ENCODE measurements at regions of chr3 and their contacts with region 1.

Region 1: DNA sequence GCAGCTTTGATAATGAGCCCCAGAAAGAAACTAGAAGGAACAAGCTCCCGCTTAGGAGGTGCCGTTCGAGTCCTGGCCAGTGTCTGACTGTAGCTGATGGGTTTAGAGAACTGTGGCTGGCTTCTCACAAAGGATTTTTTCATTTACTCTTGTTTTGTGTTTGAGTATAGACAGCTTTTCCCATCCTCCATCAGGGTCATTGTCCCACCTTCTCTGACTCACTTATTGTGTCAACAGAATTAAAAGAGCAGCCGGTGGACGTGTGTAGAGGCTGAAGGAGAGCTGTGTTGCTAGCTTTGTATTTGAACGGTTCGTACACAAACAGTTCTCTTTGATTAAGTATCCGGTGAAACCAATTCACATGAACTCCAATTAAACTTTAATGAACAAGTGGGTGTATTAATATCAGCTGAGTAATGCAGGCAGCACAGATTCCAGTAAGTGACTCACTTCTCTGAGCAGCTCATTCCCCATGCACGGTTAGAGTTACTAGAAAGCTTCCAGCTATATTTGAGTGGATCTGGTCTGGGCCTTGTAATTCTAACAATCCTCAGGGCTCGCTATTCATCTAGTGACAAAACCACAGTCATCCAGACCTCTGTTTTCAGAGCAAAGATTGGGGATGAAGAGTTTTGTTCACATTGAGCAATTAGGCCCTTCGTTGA is 141.0 kb downstream of the LPP start:
- DNase-seq: peak; percentile 94
- ATAC-seq: peak; percentile 89
- H3K4me3 ChIP-seq: peak overlapping the region; percentile 22; the same call in 1 of the 2 replicates
- H3K27ac ChIP-seq: peak overlapping the region; percentile 85
- H3K4me1 ChIP-seq: peaks cover 62% of the 10 kb centered on the region
- H3K27me3 ChIP-seq: no peaks in the 10 kb centered on the region
- CTCF ChIP-seq: no peak

Region 2: DNA sequence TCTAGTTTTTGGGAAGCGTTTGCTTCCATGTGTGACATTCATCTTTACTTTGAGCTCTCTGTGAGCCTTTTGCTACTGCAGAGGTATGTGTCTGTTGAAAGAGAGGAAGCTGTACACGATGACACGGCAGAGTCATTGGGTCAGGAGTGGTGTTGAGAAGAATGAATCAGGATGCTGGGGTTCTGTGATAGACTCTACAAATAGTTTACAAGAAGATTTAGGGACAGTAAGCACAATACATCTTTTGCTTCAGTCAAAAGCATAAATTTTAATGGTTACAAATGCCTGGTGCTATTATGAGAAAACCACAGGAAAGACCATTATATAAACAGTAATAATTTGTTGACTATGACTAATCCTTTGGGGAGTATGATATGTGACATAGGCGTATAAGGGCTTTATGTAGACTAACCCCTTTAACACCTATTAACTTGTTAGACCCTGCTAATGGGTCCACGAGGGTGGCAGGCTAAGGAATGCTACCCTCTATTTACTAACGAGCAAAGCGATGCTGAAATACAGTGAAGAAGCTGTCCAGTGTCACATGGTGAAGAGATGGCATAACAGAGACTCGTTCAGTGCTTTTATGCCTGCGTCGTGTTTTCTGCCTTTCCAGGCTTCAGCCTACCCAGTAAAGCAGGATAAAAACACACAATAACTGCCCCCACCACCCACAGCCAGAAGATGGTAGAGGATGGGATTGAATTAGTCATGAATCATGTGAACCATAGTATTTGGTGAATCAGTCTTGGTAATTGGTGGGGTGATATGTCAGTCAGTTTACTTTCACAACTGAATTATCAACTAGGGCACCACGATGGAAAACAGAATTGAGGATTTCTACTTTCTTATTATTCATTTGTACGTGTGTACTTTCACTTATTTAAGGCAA is 22.2 kb before region 1 on chr3:
- CTCF ChIA-PET with region 1: interaction called, 5 read pairs
- POLR2A ChIA-PET with region 1: interaction called, 3 read pairs
- intact Hi-C with region 1: loop called (anchors 1 kb)
- DNase-seq: peak; percentile 87
- ATAC-seq: peak; percentile 89
- H3K4me3 ChIP-seq: 0 out of 2 replicates have a peak overlapping the region, but pooled peaks have one; percentile 14
- H3K27ac ChIP-seq: peak overlapping the region; percentile 91
- H3K4me1 ChIP-seq: peaks cover 59% of the 10 kb centered on the region
- H3K27me3 ChIP-seq: no peaks in the 10 kb centered on the region
- CTCF ChIP-seq: no peak

Region 3: DNA sequence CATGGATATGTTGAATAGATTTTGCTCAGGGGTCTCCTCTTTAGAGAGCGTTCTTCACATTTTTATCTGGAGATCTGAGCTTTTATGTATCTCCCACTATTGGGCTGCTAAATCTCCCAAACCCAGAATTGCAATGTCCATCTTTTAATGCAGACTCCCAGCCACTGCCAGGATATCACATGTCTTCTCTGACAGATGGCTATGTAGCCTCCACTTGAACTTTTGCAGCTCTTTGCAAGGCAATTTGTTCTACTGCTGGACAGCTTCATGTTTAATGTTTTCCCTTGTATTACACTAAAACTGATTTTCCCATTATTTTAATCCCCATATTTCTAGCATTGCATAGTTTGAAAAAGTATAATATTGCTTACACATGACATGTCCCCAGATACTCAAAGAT is 36.2 kb after region 1 on chr3:
- CTCF ChIA-PET with region 1: no interaction called
- POLR2A ChIA-PET with region 1: no interaction called
- intact Hi-C with region 1: no loop called
- DNase-seq: no peak
- ATAC-seq: no peak
- H3K4me3 ChIP-seq: no peak overlapping the region
- H3K27ac ChIP-seq: no peak overlapping the region
- H3K4me1 ChIP-seq: peaks cover 11% of the 10 kb centered on the region
- H3K27me3 ChIP-seq: no peaks in the 10 kb centered on the region
- CTCF ChIP-seq: no peak

Region 4: DNA sequence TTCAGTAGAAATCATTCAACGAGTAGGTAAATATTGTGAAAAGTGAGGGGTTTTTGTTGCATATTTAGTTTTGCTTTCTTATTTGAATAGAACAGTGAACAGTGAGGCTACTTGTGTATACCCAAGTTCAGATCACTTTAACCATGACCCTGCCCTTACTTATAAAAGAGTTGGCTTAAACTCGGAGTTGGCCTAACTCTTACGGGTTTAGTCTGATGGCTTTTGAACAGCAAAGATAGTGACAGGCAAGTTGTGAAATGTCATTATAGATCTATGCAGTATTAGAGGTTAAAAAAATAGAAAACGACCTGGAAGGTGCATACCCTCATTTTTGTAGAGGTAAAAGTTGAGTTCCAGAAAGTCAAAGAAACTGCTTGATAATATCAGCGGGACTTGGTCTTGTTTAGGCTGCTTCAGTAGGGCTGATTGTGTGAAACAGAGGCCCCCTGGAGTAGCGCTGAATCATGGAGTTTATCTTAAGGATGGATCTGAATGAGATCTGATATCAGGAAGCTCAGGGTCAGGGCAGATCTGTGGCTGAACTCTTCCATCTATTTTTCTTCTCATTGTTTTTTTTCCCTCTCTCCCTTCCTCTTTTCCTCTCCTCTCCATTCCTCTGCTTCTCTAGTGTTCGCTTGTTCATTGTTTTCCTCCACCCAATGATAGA is 218.8 kb after region 1 on chr3:
- CTCF ChIA-PET with region 1: no interaction called
- POLR2A ChIA-PET with region 1: no interaction called
- intact Hi-C with region 1: no loop called
- DNase-seq: no peak
- ATAC-seq: no peak
- H3K4me3 ChIP-seq: no peak overlapping the region
- H3K27ac ChIP-seq: no peak overlapping the region
- H3K4me1 ChIP-seq: peaks cover 9% of the 10 kb centered on the region
- H3K27me3 ChIP-seq: no peaks in the 10 kb centered on the region
- CTCF ChIP-seq: no peak

Region 5: GRCh38 chr3:188526057-188526456 is 231.1 kb after region 1 on chr3:
- CTCF ChIA-PET with region 1: no interaction called
- POLR2A ChIA-PET with region 1: no interaction called
- intact Hi-C with region 1: loop called (anchors 5 kb)
- DNase-seq: peak; percentile 39
- ATAC-seq: no peak
- H3K4me3 ChIP-seq: no peak overlapping the region
- H3K27ac ChIP-seq: no peak overlapping the region
- H3K4me1 ChIP-seq: peaks cover 32% of the 10 kb centered on the region
- H3K27me3 ChIP-seq: no peaks in the 10 kb centered on the region
- CTCF ChIP-seq: no peak; the same call in 1 of the 2 replicates

Region 6: DNA sequence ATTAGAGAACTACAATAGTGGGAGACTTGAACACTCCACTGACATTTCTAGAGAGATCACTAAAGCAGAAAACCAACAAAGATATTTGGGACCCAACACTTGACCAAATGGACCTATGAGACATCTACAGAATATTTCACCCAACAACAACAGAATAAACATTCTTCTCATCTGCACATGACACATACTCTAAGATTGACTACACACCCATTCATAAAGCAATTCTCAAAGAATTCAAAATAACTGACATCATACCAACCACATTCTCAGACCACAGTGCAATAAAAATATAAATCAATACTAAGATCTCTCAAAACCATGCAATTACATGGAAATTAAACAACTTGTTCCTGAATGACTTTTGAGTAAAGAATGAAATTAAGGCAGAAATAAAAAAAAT is 332.7 kb after region 1 on chr3:
- CTCF ChIA-PET with region 1: no interaction called
- POLR2A ChIA-PET with region 1: no interaction called
- intact Hi-C with region 1: loop called (anchors 5 kb)
- DNase-seq: peak; percentile 91
- ATAC-seq: peak; percentile 91
- H3K4me3 ChIP-seq: 0 out of 2 replicates have a peak overlapping the region, but pooled peaks have one; percentile 5
- H3K27ac ChIP-seq: peak overlapping the region; percentile 88
- H3K4me1 ChIP-seq: peaks cover 41% of the 10 kb centered on the region
- H3K27me3 ChIP-seq: no peaks in the 10 kb centered on the region
- CTCF ChIP-seq: no peak

Measured in PC-3 (cell line).